ENCODE measurements at regions of chr3 and their contacts with region 1.

Region 1: DNA sequence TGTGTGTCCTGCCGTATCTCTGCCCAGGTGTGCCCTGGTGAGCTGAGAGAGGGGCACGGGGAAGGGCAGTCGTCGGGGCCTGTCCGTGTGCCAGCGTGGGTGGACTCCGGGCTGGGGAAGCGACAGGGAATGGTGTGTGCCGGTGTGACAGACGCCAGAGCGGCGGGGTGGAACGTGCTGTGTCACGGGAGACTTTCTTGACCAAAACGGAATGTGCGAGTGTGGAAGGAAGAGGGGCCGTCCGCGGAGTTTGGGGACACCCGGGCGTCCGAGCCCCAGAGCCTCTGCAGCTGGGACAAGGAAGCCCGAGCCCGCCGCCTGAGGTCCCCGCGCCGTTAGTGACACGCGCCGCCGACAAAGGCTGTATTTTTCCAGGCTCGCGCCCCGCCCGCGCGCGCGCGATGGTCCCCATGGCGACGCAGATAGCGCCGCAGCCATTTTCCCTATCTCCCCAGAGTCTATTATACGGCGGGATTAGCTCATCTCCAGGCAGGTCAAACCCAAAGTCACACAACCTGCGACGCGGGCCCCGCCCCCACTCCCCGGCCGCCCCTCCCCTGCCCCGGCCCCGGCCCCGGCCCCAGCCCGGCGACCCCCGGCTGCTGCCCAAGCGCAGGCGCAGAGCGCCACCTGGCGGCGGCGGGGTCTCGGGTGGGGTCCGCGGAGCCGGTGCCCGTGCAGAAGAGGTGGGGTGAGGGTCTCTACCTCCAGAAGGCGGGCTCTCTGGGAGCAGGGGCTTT is 4.6 kb upstream of the GATA2 start:
- DNase-seq: peak; percentile 51 to 56
- H3K4me3 ChIP-seq: peak overlapping the region in 1 of 3 donors; percentile 34
- H3K27ac ChIP-seq: no peak overlapping the region
- H3K4me1 ChIP-seq: peaks cover 6 to 22% of the 10 kb centered on the region in 2 donors
- H3K27me3 ChIP-seq: peaks cover 3% of the 10 kb centered on the region
- CTCF ChIP-seq: peak in 5 of 6 experiments; percentile 41 to 93 (median 45)
- POLR2A ChIP-seq: no peak

Region 2: GRCh38 chr3:128426128-128426921 is 71.2 kb before region 1 on chr3:
- intact Hi-C with region 1: loop called (anchors 5 kb)
- DNase-seq: peak; percentile 45 to 48
- H3K4me3 ChIP-seq: no peak overlapping the region
- H3K27ac ChIP-seq: no peak overlapping the region
- H3K4me1 ChIP-seq: peaks cover 3 to 7% of the 10 kb centered on the region in 2 donors
- H3K27me3 ChIP-seq: no peaks in the 10 kb centered on the region
- CTCF ChIP-seq: peak; percentile 27 to 99 (median 86)
- POLR2A ChIP-seq: no peak

Region 3: GRCh38 chr3:128736601-128737000 is 239.0 kb after region 1 on chr3:
- intact Hi-C with region 1: no loop called
- DNase-seq: no peak
- H3K4me3 ChIP-seq: no peak overlapping the region
- H3K27ac ChIP-seq: no peak overlapping the region
- H3K4me1 ChIP-seq: peaks cover 25 to 32% of the 10 kb centered on the region in 2 donors
- H3K27me3 ChIP-seq: no peaks in the 10 kb centered on the region
- CTCF ChIP-seq: no peak
- POLR2A ChIP-seq: no peak

Measured in thyroid gland (tissue), 4 donors.